Heart left ventricle (tissue), 16 donors: ENCODE measurements at regions of chr13 and their contacts with region 1.

Region 1: GRCh38 chr13:102091231-102091630 is 310.6 kb downstream of the FGF14 start:
- DNase-seq: no peak
- ATAC-seq: peak in 3 of 4 donors; percentile 10 to 29 (median 27)
- H3K4me3 ChIP-seq: no peak overlapping the region
- H3K27ac ChIP-seq: no peak overlapping the region
- H3K4me1 ChIP-seq: peaks cover 0 to 28% (median 0%) of the 10 kb centered on the region in 12 donors
- H3K27me3 ChIP-seq: no peaks in the 10 kb centered on the region
- CTCF ChIP-seq: peak in 4 of 12 donors; percentile 7 to 26 (median 14)
- POLR2A ChIP-seq: no peak

Region 2: DNA sequence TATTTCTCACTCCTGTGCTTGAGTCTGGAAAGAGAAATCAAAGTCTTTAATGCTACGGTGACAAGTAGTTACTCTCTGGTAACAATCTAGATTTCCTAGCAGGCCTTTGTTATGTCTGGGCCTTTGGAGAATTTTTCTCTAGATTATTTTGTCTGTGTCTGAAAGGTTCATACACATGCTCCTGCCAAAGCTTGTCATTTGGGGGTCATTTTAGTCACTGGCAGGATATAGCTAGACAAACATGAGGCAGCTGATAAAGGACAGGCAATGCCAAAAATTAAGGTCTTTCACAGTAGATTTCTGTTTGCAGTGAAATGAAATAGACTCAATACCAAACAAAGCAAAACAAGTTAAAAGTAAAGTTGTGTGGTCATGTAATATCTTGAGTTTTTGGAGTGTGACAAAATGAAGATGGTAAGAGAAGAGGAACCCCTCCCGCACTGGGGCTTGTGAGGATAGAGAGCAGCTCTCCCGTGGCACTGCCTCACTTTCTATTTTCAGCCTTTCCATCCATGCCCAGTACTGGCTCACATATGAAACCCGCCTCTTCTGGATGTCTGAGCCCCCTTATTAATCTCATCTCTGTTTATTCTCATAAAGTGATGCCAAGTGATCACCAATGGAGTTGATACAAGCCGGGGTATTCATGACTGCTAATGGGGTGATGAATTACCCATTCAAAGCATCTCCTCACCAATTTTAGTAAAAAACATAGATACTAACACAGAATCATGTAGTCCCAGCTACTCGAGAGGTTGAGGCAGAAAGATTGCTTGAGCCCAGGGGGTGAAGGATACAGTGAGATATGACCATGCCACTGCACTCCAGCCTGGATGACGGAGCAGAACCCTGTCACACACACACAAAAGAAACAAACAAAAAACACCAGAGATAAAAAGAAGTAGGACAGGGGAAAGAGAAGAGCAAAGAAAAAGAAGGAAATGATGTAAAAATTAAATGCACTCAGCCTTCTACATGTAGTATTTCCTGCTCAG is 78.6 kb before region 1 on chr13:
- intact Hi-C with region 1: loop called in 3 of 10 experiments (anchors 5 kb)
- DNase-seq: peak in 4 of 5 donors; percentile 61 to 73 (median 66)
- ATAC-seq: peak; percentile 94 to 98 (median 97)
- H3K4me3 ChIP-seq: peak overlapping the region in 2 of 12 donors; percentile 1 to 5
- H3K27ac ChIP-seq: peak overlapping the region; percentile 66 to 91 (median 80)
- H3K4me1 ChIP-seq: peaks cover 0 to 38% (median 16%) of the 10 kb centered on the region in 12 donors
- H3K27me3 ChIP-seq: no peaks in the 10 kb centered on the region
- CTCF ChIP-seq: no peak
- POLR2A ChIP-seq: no peak

Region 3: DNA sequence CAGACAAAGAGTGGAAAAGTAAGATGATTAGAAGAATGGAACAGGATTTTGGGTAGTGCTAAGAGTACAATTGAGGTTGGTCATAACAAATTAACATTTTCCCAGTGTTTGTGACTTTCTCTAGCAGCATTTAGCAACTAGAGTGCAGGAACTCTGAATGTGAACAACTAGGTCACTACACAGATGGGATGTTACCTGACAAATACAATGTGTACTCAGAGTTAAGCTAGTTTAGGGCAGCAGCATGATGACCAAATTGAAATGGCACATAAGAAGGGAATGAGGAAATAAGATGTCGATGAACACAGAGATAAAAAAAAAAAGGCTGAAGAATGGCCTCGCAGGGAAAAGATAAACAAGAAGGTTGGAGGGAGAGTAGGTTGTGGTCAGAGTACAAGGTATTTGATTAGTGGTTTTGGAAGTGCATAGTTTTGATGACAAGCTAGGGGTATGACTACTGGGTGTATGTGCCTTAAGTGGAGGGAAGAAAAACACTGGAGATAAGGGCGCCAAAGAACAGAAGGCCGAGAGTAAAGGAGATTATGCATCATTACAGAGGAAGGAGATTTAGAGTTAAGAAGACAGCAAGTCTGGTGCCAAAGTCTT is 70.5 kb before region 1 on chr13:
- intact Hi-C with region 1: loop called in 1 of 10 experiments (anchors 10 kb)
- DNase-seq: no peak
- ATAC-seq: no peak
- H3K4me3 ChIP-seq: no peak overlapping the region
- H3K27ac ChIP-seq: no peak overlapping the region
- H3K4me1 ChIP-seq: no peaks in the 10 kb centered on the region
- H3K27me3 ChIP-seq: no peaks in the 10 kb centered on the region
- CTCF ChIP-seq: no peak
- POLR2A ChIP-seq: no peak